Activated CD8-positive, alpha-beta T cell treated with anti-CD3 and anti-CD28 coated beads for 36 hours (primary cell): ENCODE measurements at regions of chr2 and their contacts with region 1.

Region 1: DNA sequence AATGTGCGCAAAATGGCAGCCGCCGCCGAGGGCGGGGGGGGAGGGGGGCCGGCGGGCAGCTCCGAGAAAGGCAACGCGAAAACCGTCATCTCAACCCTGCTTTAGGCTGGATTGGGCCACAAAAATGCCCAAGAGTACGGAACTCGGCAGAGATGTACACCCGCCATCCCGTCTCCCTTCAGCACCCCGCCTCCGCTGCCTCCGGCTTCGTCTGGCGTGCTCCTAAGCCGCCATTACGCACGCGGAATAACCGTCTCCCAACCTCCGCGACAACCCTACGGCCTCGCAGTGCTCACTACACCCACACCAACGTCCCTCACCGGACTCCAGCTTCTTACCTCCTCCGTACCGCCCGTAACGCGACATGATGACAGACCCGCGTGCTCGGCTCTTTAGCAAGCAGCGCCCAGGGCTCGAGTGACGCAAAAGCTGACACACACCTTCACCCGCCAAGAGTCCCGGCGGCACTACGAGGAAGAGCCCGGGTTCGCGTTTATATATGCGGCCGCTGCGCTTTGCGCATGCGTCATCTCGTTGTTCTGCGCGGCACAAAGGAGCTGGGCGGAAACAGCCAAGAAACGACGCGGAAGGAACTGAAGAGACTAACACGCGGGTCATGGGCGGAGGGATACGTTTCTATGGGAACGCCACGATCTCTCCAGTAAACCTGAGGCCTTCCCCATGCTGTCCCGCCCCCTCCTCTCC is at the start of gene SRSF7:
- DNase-seq: peak; percentile 98
- ATAC-seq: peak; percentile 81
- H3K4me3 Mint-ChIP-seq: peak within 1 kb of the TSS; percentile 95
- H3K27ac Mint-ChIP-seq: peak within 1 kb of the TSS; percentile 100
- H3K4me1 Mint-ChIP-seq: peaks cover 44% of the 10 kb centered on the region
- H3K27me3 Mint-ChIP-seq: peaks cover 3% of the 10 kb centered on the region
- CTCF ChIP-seq: no peak
- total RNA-seq, gene SRSF7: 320 to 333 TPM

Region 2: DNA sequence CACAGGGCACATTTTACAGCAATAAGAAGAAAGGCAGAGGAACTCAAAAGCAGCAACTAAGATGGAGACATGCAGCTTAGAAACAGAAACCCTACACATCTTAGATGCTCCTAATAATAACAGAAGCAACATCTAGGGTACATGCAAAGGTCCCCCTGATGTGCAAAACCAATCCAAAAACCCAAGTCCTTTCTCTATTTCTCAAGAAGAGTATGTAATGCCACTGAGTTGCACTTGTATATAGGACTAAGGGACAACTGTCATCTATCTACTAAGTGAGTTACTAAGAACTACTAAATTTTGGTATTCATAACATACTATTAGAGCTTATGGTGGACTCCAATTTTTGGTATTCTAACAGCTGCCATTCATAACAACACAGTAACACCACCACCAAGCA is 176.8 kb before region 1 on chr2:
- CTCF ChIA-PET with region 1: interaction called, 3 read pairs
- POLR2A ChIA-PET with region 1: interaction called, 10 read pairs
- intact Hi-C with region 1: no loop called
- DNase-seq: no peak
- ATAC-seq: no peak
- H3K4me3 Mint-ChIP-seq: no peak overlapping the region
- H3K27ac Mint-ChIP-seq: peak overlapping the region; percentile 12
- H3K4me1 Mint-ChIP-seq: peaks cover 24% of the 10 kb centered on the region
- H3K27me3 Mint-ChIP-seq: no peaks in the 10 kb centered on the region
- CTCF ChIP-seq: no peak

Region 3: GRCh38 chr2:38765149-38765548 is 14.1 kb after region 1 on chr2:
- CTCF ChIA-PET with region 1: interaction called, 3 read pairs
- POLR2A ChIA-PET with region 1: interaction called, 62 read pairs
- intact Hi-C with region 1: no loop called
- DNase-seq: no peak
- ATAC-seq: no peak
- H3K4me3 Mint-ChIP-seq: no peak overlapping the region
- H3K27ac Mint-ChIP-seq: no peak overlapping the region
- H3K4me1 Mint-ChIP-seq: peaks cover 2% of the 10 kb centered on the region
- H3K27me3 Mint-ChIP-seq: no peaks in the 10 kb centered on the region
- CTCF ChIP-seq: no peak

Region 4: GRCh38 chr2:38778687-38779082 is 27.6 kb after region 1 on chr2:
- CTCF ChIA-PET with region 1: no interaction called
- POLR2A ChIA-PET with region 1: interaction called, 59 read pairs
- intact Hi-C with region 1: no loop called
- DNase-seq: no peak
- ATAC-seq: no peak
- H3K4me3 Mint-ChIP-seq: peak overlapping the region; percentile 96
- H3K27ac Mint-ChIP-seq: peak overlapping the region; percentile 91
- H3K4me1 Mint-ChIP-seq: peaks cover 8% of the 10 kb centered on the region
- H3K27me3 Mint-ChIP-seq: peaks cover 6% of the 10 kb centered on the region
- CTCF ChIP-seq: no peak